ENCODE measurements at regions of chr5 and their contacts with region 1.

Region 1: DNA sequence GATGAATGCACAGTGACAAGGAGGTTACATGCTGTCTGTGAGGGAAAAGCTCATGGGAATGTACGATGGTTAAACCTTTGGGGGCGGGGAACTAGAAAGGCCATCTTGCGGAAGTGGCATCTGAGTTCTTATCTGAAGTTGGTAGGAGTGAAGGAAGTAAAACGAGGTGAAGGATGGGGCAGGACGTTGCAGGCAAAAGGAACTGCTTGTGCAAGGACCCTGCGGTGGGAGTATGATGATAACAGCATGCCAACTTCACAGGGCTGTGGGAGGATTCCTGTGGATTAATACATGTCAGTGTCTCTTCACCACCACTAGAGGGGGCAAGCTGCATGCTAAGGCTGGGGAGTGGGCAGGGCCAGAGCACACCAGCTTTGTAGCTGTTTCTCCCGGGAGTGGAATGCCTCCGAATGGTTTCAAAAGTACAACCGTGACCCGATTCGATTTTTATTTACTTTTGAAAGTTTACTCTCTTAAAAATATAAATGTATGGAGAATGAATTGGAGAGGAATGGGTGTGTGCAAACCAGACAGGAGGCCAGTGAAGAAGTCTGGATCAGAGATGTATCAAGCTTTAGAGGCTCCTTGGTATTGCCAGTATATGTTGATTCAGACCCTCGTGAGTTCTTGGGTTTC is 62.5 kb downstream of the CYFIP2 start:
- DNase-seq: no peak
- ATAC-seq: peak; percentile 94

Region 2: DNA sequence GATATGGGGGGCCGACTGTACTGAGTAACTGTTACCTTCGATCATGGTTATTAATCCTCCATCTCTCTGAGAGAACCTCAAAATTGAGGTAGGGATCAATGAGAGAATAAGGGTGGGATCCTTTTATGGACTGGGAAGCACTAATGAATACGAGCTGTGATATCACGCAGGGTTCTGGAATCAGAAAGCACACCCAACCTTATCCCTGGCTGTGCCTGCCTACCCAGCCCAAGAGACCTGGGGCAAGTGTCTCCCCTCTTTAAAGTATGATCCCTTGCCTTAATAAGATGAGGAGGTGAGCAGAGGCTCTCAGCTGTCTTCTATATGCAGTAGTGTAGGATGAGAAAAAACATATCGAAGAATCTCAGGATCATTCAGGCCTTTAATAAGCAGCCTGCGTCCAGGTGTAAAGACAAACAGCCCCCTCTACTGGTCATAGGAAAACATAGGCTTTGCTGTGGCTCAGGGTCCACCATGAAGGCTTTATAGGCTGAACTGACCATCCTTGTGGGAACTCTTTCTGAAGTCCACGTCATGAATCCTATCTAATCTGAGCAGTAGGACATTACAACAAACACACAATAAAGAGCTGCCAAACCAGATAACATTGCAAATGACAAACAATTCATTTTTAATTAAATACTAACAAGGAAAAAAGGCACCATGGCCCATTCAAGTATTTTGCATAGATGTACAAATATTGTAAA is 148.5 kb after region 1 on chr5:
- intact Hi-C with region 1: loop called (anchors 10 kb)
- DNase-seq: no peak
- ATAC-seq: peak; percentile 73

Measured in sciatic nerve (tissue), 2 donors.